Activated CD4-positive, alpha-beta T cell treated with anti-CD3 and anti-CD28 coated beads, Interleukin-2, amount 10 ng/mL, durations not matched to agents 24 days and 14 days (primary cell): ENCODE measurements at regions of chr10 and their contacts with region 1.

Region 1: GRCh38 chr10:71957546-71958275 is 6.5 kb upstream of the CHST3 start:
- DNase-seq: no peak
- H3K4me3 Mint-ChIP-seq: no peak overlapping the region
- H3K27ac Mint-ChIP-seq: no peak overlapping the region
- H3K4me1 Mint-ChIP-seq: peaks cover 3% of the 10 kb centered on the region
- H3K27me3 Mint-ChIP-seq: peaks cover 32% of the 10 kb centered on the region

Region 2: GRCh38 chr10:71868192-71868697 is 89.5 kb before region 1 on chr10:
- intact Hi-C with region 1: no loop called
- DNase-seq: no peak
- H3K4me3 Mint-ChIP-seq: no peak overlapping the region
- H3K27ac Mint-ChIP-seq: no peak overlapping the region
- H3K4me1 Mint-ChIP-seq: peaks cover 5% of the 10 kb centered on the region
- H3K27me3 Mint-ChIP-seq: no peaks in the 10 kb centered on the region

Region 3: DNA sequence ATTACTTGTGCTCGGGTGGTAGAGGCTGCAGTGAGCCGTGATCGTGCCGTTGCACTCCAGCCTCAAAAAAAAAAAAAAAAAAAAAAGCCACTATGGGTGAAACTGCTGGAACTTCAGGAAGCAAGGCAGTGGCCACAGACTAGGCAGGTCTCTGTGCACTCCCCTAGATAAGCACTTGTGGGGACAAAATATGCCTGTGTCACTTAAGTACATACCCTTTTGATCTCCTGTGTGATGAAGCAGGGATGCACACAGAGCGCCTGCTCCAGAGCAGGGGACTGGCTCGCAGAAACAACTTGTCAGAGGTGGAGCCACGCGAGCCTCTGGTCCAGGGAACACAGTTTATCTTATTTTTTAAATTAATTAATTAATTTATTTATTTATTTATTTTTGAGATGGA is 63.8 kb before region 1 on chr10:
- intact Hi-C with region 1: no loop called
- DNase-seq: no peak
- H3K4me3 Mint-ChIP-seq: no peak overlapping the region
- H3K27ac Mint-ChIP-seq: no peak overlapping the region
- H3K4me1 Mint-ChIP-seq: peaks cover 6% of the 10 kb centered on the region
- H3K27me3 Mint-ChIP-seq: peaks cover 4% of the 10 kb centered on the region

Region 4: GRCh38 chr10:72048450-72049124 is 90.9 kb after region 1 on chr10:
- intact Hi-C with region 1: loop called (anchors 1 kb)
- DNase-seq: peak; percentile 95
- H3K4me3 Mint-ChIP-seq: no peak overlapping the region
- H3K27ac Mint-ChIP-seq: peak overlapping the region; percentile 72
- H3K4me1 Mint-ChIP-seq: peaks cover 6% of the 10 kb centered on the region
- H3K27me3 Mint-ChIP-seq: no peaks in the 10 kb centered on the region

Region 5: DNA sequence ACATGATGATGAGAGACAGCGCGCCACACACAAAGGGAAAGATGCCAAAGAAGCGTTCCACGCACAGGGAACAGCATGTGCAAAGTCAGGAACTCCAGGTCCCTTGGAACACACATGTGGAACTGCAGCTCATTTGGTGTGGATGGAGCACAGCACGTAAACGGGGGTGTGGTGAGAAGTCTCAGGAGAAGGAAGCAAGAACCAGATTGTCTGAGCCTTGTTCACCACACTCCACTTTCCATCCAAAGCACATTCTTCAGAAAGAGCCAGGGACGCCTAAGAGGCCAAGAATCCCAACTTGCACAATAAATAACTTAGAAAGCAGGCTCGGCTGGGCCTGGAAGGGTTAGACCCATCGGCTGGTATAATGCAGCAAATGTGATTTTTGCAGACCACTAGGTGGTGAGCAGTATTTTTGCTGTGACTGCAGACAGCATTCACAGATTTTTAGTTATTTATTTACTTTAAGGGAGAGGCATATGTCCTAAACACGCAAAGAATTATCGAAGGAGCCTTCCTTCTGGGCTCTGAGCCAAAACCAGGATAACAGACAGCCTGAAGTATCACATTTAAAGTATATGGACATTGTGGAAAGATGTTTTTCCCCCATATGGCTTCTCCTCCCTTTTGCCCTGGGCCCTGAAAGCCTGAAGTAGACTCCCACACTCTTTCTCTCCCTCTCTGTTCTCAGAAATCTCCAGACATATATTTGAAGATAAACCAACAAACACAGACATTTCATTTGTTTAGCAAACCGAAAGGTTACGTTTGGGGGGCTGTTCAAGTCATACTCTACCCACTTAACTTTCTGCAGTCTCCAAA is 286.3 kb after region 1 on chr10:
- intact Hi-C with region 1: no loop called
- DNase-seq: no peak
- H3K4me3 Mint-ChIP-seq: peak overlapping the region; percentile 0
- H3K27ac Mint-ChIP-seq: peak overlapping the region; percentile 82
- H3K4me1 Mint-ChIP-seq: peaks cover 66% of the 10 kb centered on the region
- H3K27me3 Mint-ChIP-seq: no peaks in the 10 kb centered on the region